HepG2 (cell line): ENCODE measurements at regions of chr2 and their contacts with region 1.

Region 1: GRCh38 chr2:157761520-157761919 is 114.6 kb downstream of the ACVR1 start:
- DNase-seq: no peak
- ATAC-seq: no peak
- H3K4me3 ChIP-seq: no peak overlapping the region
- H3K27ac ChIP-seq: no peak overlapping the region
- H3K4me1 ChIP-seq: no peaks in the 10 kb centered on the region
- H3K27me3 ChIP-seq: no peaks in the 10 kb centered on the region
- CTCF ChIP-seq: no peak
- EP300 ChIP-seq: no peak
- POLR2A ChIP-seq: no peak
- RAD21 ChIP-seq: no peak

Region 2: GRCh38 chr2:157497638-157498314 is 263.7 kb before region 1 on chr2:
- CTCF ChIA-PET with region 1: no interaction called
- POLR2A ChIA-PET with region 1: no interaction called
- in situ Hi-C with region 1: loop called (anchors 25 kb)
- intact Hi-C with region 1: loop called (anchors 5 kb)
- DNase-seq: peak; percentile 19
- ATAC-seq: peak; percentile 95
- H3K4me3 ChIP-seq: no peak overlapping the region
- H3K27ac ChIP-seq: no peak overlapping the region
- H3K4me1 ChIP-seq: no peaks in the 10 kb centered on the region
- H3K27me3 ChIP-seq: no peaks in the 10 kb centered on the region
- CTCF ChIP-seq: peak; percentile 84
- EP300 ChIP-seq: no peak
- POLR2A ChIP-seq: no peak
- RAD21 ChIP-seq: no peak; the same call in 1 of the 2 replicates